Endothelial cell of umbilical vein (primary cell): ENCODE measurements at regions of chr9 and their contacts with region 1.

Region 1: GRCh38 chr9:88388172-88388885 is at the start of gene SPIN1:
- DNase-seq: peak; percentile 66
- H3K4me3 ChIP-seq: peak within 1 kb of the TSS; percentile 83 to 98 (median 85)
- H3K27ac ChIP-seq: peak within 1 kb of the TSS; percentile 82
- H3K4me1 ChIP-seq: peaks cover 16% of the 10 kb centered on the region
- H3K27me3 ChIP-seq: no peaks in the 10 kb centered on the region
- CTCF ChIP-seq: peak; percentile 28 to 49
- POLR2A ChIP-seq: peak; percentile 81
- total RNA-seq, gene SPIN1: 56.8 and 58.4 TPM in 2 replicates

Region 2: GRCh38 chr9:87713278-87713987 is 674.9 kb before region 1 on chr9:
- CTCF ChIA-PET with region 1: no interaction called
- POLR2A ChIA-PET with region 1: no interaction called
- dilution Hi-C with region 1: no loop called
- intact Hi-C with region 1: loop called (anchors 10 kb)
- DNase-seq: peak; percentile 88
- H3K4me3 ChIP-seq: peak overlapping the region in 1 of 3 experiments; percentile 20
- H3K27ac ChIP-seq: peak overlapping the region; percentile 93
- H3K4me1 ChIP-seq: peaks cover 29% of the 10 kb centered on the region
- H3K27me3 ChIP-seq: no peaks in the 10 kb centered on the region
- CTCF ChIP-seq: no peak
- POLR2A ChIP-seq: peak; percentile 46

Region 3: GRCh38 chr9:87973730-87974292 is 414.5 kb before region 1 on chr9:
- CTCF ChIA-PET with region 1: no interaction called
- POLR2A ChIA-PET with region 1: no interaction called
- dilution Hi-C with region 1: no loop called
- intact Hi-C with region 1: loop called (anchors 10 kb)
- DNase-seq: no peak
- H3K4me3 ChIP-seq: peak overlapping the region; percentile 41 to 50 (median 48)
- H3K27ac ChIP-seq: no peak overlapping the region
- H3K4me1 ChIP-seq: peaks cover 3% of the 10 kb centered on the region
- H3K27me3 ChIP-seq: no peaks in the 10 kb centered on the region
- CTCF ChIP-seq: no peak
- POLR2A ChIP-seq: no peak

Region 4: GRCh38 chr9:88258027-88258426 is 130.3 kb before region 1 on chr9:
- CTCF ChIA-PET with region 1: no interaction called
- POLR2A ChIA-PET with region 1: no interaction called
- dilution Hi-C with region 1: no loop called
- intact Hi-C with region 1: loop called (anchors 1 kb)
- DNase-seq: peak; percentile 64
- H3K4me3 ChIP-seq: peak overlapping the region in 1 of 3 experiments; percentile 32
- H3K27ac ChIP-seq: peak overlapping the region; percentile 5
- H3K4me1 ChIP-seq: peaks cover 5% of the 10 kb centered on the region
- H3K27me3 ChIP-seq: no peaks in the 10 kb centered on the region
- CTCF ChIP-seq: no peak
- POLR2A ChIP-seq: no peak

Region 5: DNA sequence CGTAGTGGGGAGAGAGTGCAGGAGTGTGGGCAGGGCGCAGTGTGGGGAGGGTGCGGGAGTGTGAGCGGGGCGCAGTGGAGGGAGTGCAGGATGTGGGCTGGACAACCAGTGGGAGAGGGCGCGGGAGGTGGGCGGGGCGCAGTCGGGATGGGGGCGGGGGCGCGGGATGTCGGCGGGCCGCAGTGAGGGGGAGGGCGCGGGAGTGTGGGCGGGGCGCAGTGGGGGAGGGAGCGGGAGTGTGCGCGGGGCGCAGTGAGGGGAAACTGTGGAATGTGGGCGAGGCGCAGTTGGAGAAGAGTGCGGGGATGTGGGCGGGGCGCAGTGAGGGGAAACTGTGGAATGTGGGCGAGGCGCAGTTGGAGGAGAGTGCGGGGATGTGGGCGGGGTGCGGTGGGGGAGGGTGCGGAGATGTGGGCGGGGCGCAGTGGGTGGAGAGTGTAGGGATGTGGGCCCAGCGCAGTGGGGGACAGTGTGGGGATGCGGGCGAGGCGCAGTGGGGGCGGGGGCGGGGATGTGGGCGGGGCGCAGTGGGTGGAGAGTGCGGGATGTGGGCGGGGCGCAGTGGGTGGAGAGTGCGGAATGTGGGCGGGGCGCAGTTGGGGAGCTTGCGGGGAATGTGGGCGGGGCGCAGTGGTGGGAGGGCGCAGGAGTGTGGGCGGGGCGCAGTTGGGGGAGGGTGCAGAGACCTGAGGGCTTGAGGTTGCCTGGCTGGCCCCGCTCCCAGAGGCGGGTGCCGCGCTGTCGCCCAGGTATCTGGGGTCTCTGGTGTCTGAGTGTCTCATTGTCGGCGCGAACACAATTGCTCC is 146.3 kb after region 1 on chr9 and contains the start of gene NXNL2:
- CTCF ChIA-PET with region 1: no interaction called
- POLR2A ChIA-PET with region 1: no interaction called
- dilution Hi-C with region 1: no loop called
- intact Hi-C with region 1: loop called (anchors 1 kb)
- DNase-seq: peak; percentile 61
- H3K4me3 ChIP-seq: peak within 1 kb of the TSS; percentile 13 to 49 (median 14)
- H3K27ac ChIP-seq: no peak within 1 kb of the TSS
- H3K4me1 ChIP-seq: peaks cover 5% of the 10 kb centered on the region
- H3K27me3 ChIP-seq: peaks cover 16 to 23% of the 10 kb centered on the region in 2 experiments
- CTCF ChIP-seq: no peak
- POLR2A ChIP-seq: no peak
- total RNA-seq, gene NXNL2: not detected in 2 replicates

Region 6: GRCh38 chr9:88628114-88628513 is 239.8 kb after region 1 on chr9:
- CTCF ChIA-PET with region 1: no interaction called
- POLR2A ChIA-PET with region 1: no interaction called
- dilution Hi-C with region 1: no loop called
- intact Hi-C with region 1: no loop called
- DNase-seq: no peak
- H3K4me3 ChIP-seq: no peak overlapping the region
- H3K27ac ChIP-seq: no peak overlapping the region
- H3K4me1 ChIP-seq: no peaks in the 10 kb centered on the region
- H3K27me3 ChIP-seq: no peaks in the 10 kb centered on the region
- CTCF ChIP-seq: no peak
- POLR2A ChIP-seq: no peak

Region 7: DNA sequence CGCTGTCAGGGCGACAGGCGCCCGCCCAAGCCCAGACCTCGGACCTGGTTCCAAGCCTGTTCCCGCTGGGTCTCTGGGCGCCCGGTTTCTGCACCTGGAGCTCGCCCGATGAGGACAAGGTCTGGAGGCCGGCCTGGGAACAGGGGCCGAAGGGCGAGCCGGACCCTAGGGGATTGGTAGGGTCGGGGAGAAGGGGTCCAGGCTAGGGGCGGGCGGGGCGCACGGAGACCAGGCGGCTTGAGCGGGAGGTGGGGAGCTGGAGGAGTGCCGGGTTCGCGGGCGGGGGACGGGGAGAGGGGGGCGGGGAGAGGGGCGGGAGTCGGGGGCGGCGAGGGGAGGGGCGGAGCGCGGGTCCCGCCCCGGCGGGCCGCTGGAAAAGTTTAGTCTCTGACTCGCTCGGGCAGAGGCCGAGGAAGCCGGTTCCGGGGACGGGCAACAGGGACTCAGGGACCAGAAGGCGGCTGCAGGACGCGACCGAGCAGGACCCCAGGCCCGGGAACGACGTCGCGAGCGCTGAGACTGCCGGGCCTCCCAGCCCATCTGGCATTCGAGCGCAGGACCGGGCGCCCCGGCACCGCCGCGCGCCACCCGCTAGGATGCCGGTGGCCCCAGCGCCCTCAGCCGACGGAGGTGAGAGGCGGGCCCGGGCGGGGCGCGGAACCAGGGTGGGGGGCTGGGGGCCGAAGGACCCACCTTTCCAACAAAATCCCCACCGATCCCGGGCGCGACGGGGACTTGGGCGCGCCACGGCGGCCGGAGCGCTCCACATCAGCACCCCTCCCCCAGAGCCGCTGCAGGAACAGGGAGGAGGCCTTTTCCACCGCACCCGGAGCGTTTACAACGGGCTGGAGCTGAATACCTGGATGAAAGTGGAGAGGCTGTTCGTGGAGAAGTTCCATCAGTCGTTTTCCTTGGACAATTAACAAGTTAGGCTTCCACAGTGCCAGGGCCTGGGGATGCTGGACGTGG is 603.0 kb after region 1 on chr9 and contains the start of gene S1PR3:
- CTCF ChIA-PET with region 1: no interaction called
- POLR2A ChIA-PET with region 1: no interaction called
- dilution Hi-C with region 1: no loop called
- intact Hi-C with region 1: loop called (anchors 5 kb)
- DNase-seq: peak; percentile 45
- H3K4me3 ChIP-seq: peak within 1 kb of the TSS; percentile 52 to 99 (median 96)
- H3K27ac ChIP-seq: peak within 1 kb of the TSS; percentile 58
- H3K4me1 ChIP-seq: peaks cover 37% of the 10 kb centered on the region
- H3K27me3 ChIP-seq: no peaks in the 10 kb centered on the region
- CTCF ChIP-seq: peak; percentile 5 to 9
- POLR2A ChIP-seq: peak; percentile 41
- total RNA-seq, gene S1PR3: 18.9 and 25.8 TPM in 2 replicates